CD8-positive, alpha-beta T cell (primary cell): ENCODE measurements at regions of chr10 and their contacts with region 1.

Region 1: DNA sequence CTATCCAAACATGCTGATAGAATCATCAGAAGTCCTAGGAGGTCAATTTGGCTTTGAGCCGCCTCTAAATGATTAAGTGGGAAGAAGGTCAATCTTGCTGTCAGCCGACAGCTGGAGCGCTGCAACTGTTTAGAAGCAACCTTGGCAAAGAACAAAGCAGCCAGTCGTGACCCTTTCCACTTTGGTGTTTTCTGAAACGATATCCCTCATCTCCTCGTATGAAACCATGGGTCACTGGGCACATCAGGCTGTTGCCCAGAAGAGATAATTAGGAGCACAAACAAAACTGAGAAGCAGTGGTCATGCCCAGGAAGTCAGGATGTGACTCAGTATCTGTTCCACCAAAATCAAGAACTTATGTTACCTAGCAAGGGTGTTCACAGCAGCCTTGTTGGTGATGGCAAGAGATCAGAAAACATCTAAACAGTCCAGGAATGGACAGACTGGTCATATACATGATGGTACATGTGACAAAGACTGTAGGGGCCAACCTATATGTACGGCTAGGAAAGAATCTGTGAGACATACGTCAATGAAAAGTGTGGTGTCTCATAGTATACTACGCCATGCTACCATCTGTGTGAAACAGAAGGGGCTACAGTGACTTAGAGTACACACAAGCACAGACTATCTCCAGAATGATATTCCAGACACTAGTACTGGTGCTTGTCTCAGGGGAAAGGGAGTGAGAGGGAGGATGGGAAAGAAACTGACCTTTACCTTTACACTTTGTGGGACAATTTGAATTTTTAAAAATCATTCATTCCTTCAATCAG is 22.4 kb downstream of the STN1 start:
- DNase-seq: no peak
- ATAC-seq: no peak
- H3K4me3 ChIP-seq: no peak overlapping the region
- H3K4me3 Mint-ChIP-seq: no peak overlapping the region
- H3K27ac ChIP-seq: no peak overlapping the region
- H3K27ac Mint-ChIP-seq: peak overlapping the region; percentile 34
- H3K4me1 ChIP-seq: peaks cover 19% of the 10 kb centered on the region
- H3K4me1 Mint-ChIP-seq: peaks cover 36% of the 10 kb centered on the region
- H3K27me3 ChIP-seq: no peaks in the 10 kb centered on the region
- H3K27me3 Mint-ChIP-seq: no peaks in the 10 kb centered on the region
- CTCF ChIP-seq: no peak

Region 2: GRCh38 chr10:103911021-103911459 is 15.4 kb after region 1 on chr10:
- CTCF ChIA-PET with region 1: interaction called, 5 read pairs
- POLR2A ChIA-PET with region 1: interaction called, 6 read pairs
- intact Hi-C with region 1: loop called in 1 of 2 experiments (anchors 1 kb)
- DNase-seq: peak; percentile 7 to 83 (median 53)
- ATAC-seq: peak; percentile 72
- H3K4me3 ChIP-seq: peak overlapping the region; percentile 24 to 39
- H3K4me3 Mint-ChIP-seq: peak overlapping the region; percentile 80
- H3K27ac ChIP-seq: peak overlapping the region; percentile 77 to 88
- H3K27ac Mint-ChIP-seq: peak overlapping the region; percentile 91
- H3K4me1 ChIP-seq: peaks cover 88% of the 10 kb centered on the region
- H3K4me1 Mint-ChIP-seq: peaks cover 82% of the 10 kb centered on the region
- H3K27me3 ChIP-seq: no peaks in the 10 kb centered on the region
- H3K27me3 Mint-ChIP-seq: no peaks in the 10 kb centered on the region
- CTCF ChIP-seq: no peak

Region 3: GRCh38 chr10:103936022-103936421 is 40.4 kb after region 1 on chr10:
- CTCF ChIA-PET with region 1: no interaction called
- POLR2A ChIA-PET with region 1: no interaction called
- intact Hi-C with region 1: loop called (anchors 1 to 5 kb)
- DNase-seq: no peak
- ATAC-seq: no peak
- H3K4me3 ChIP-seq: no peak overlapping the region
- H3K4me3 Mint-ChIP-seq: no peak overlapping the region
- H3K27ac ChIP-seq: no peak overlapping the region
- H3K27ac Mint-ChIP-seq: no peak overlapping the region
- H3K4me1 ChIP-seq: no peaks in the 10 kb centered on the region
- H3K4me1 Mint-ChIP-seq: no peaks in the 10 kb centered on the region
- H3K27me3 ChIP-seq: no peaks in the 10 kb centered on the region
- H3K27me3 Mint-ChIP-seq: no peaks in the 10 kb centered on the region
- CTCF ChIP-seq: no peak